Left cardiac atrium (tissue), 4 donors: ENCODE measurements at regions of chr19 and their contacts with region 1.

Region 1: GRCh38 chr19:11137542-11138384 is 17.8 kb downstream of the SPC24 start:
- DNase-seq: peak; percentile 89
- ATAC-seq: peak; percentile 54 to 60

Region 2: DNA sequence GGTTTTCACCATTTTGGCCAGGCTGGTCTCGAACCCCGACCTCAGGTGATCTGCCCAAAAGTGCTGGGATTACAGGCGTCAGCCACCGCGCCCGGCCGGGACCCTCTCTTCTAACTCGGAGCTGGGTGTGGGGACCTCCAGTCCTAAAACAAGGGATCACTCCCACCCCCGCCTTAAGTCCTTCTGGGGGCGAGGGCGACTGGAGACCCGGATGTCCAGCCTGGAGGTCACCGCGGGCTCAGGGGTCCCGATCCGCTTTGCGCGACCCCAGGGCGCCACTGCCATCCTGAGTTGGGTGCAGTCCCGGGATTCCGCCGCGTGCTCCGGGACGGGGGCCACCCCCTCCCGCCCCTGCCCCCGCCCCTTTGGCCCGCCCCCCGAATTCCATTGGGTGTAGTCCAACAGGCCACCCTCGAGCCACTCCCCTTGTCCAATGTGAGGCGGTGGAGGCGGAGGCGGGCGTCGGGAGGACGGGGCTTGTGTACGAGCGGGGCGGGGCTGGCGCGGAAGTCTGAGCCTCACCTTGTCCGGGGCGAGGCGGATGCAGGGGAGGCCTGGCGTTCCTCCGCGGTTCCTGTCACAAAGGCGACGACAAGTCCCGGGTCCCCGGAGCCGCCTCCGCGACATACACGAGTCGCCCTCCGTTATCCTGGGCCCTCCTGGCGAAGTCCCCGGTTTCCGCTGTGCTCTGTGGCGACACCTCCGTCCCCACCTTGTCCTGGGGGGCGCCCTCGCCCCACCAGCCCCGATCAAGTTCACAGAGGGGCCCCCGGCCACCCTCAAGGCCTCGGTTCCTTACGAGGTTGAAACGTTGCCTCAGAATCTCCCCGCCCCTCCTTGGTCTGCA is 47.5 kb before region 1 on chr19:
- intact Hi-C with region 1: no loop called
- DNase-seq: peak; percentile 99
- ATAC-seq: peak; percentile 89 to 94

Region 3: GRCh38 chr19:11197264-11198174 is 59.8 kb after region 1 on chr19 and contains the start of gene KANK2:
- intact Hi-C with region 1: loop called (anchors 2 to 5 kb)
- DNase-seq: peak; percentile 87
- ATAC-seq: peak; percentile 91 to 92
- total RNA-seq, gene KANK2: 238 to 255 TPM